CD4-positive, alpha-beta T cell (primary cell): ENCODE measurements at regions of chr6 and their contacts with region 1.

Region 1: DNA sequence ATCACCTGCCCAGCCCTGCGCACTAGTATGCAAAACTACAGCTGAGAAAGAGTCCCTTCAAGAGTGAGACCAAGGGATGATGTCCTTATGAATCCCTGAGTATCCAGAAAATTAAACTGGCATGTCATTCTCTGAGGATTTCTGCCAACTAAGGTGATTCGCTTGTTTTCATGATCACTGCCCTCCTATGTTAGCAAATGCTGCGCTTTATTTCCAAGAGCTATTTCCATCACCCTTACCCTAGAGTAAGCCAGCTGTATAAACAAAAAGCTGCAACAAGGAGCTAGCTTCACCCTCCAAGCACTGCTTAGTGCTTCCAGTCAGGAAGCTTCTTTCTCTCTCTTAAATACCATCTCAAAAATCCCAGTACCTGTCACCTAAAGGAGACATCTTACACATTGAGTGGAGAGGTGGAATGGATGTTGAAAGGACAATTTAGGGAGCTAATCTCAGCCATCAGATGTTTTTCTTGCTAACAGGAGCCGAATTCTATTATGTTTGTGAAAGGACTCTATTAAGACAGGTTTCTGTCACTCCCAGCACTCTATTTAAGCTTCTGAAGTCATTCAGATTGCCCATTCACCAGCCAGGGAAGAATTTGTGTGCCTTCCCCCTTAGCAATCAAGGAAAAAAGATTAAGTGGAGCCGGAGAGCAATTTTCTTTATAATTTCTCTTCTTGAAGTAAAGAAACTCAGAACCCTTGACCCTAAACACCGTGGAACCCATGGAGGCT is 322.2 kb downstream of the NRN1 start:
- DNase-seq: no peak
- ATAC-seq: no peak
- H3K4me3 ChIP-seq: no peak overlapping the region
- H3K4me3 Mint-ChIP-seq: no peak overlapping the region
- H3K27ac ChIP-seq: no peak overlapping the region
- H3K27ac Mint-ChIP-seq: no peak overlapping the region
- H3K4me1 ChIP-seq: no peaks in the 10 kb centered on the region
- H3K4me1 Mint-ChIP-seq: peaks cover 22% of the 10 kb centered on the region
- H3K27me3 ChIP-seq: no peaks in the 10 kb centered on the region
- H3K27me3 Mint-ChIP-seq: no peaks in the 10 kb centered on the region
- CTCF ChIP-seq: no peak

Region 2: DNA sequence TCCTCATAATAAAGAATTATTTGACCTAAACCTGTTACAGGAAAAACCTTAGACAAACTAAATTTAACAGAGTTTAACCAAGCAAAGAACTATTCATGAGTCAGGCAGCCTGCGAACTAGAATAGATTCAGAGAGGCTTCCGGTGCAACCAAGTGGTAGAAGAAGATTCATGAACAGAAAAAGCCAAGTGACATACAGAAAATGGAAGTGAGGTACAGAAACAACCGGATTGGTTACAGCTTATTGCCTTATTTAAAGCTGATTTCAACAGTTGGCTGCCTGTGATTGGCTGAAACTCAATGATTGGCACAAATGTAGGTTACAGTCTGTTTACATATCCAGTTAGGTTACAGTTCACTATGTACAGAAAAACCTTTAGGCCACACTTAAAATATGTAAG is 589.3 kb before region 1 on chr6:
- CTCF ChIA-PET with region 1: no interaction called
- POLR2A ChIA-PET with region 1: no interaction called
- intact Hi-C with region 1: no loop called
- DNase-seq: no peak
- ATAC-seq: no peak
- H3K4me3 ChIP-seq: no peak overlapping the region
- H3K4me3 Mint-ChIP-seq: no peak overlapping the region
- H3K27ac ChIP-seq: no peak overlapping the region
- H3K27ac Mint-ChIP-seq: no peak overlapping the region
- H3K4me1 ChIP-seq: no peaks in the 10 kb centered on the region
- H3K4me1 Mint-ChIP-seq: peaks cover 19% of the 10 kb centered on the region
- H3K27me3 ChIP-seq: peaks cover 3 to 9% of the 10 kb centered on the region in 2 experiments
- H3K27me3 Mint-ChIP-seq: peaks cover 22% of the 10 kb centered on the region
- CTCF ChIP-seq: no peak

Region 3: DNA sequence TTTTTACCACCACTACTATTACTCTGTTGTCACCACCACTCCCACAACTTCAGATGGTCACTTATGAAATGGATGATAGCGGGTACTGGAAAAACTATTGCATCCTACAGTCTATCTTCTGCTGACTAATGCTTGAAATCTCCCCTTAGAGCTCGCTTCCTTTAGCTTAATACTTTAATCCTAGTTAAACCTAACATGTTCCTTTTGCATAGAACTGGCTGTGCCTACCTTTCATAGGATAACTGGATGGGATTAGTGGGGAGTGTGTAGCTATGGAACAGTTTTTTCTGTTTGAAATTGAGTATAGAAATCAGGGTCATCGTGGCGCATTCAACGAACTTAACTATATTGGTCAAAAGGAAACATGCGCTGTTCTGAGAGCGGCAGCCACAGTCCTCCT is 128.5 kb before region 1 on chr6:
- CTCF ChIA-PET with region 1: no interaction called
- POLR2A ChIA-PET with region 1: no interaction called
- intact Hi-C with region 1: no loop called
- DNase-seq: no peak
- ATAC-seq: no peak
- H3K4me3 ChIP-seq: no peak overlapping the region
- H3K4me3 Mint-ChIP-seq: no peak overlapping the region
- H3K27ac ChIP-seq: no peak overlapping the region
- H3K27ac Mint-ChIP-seq: no peak overlapping the region
- H3K4me1 ChIP-seq: no peaks in the 10 kb centered on the region
- H3K4me1 Mint-ChIP-seq: peaks cover 5% of the 10 kb centered on the region
- H3K27me3 ChIP-seq: no peaks in the 10 kb centered on the region
- H3K27me3 Mint-ChIP-seq: no peaks in the 10 kb centered on the region
- CTCF ChIP-seq: no peak

Region 4: GRCh38 chr6:5706124-5707033 is 21.9 kb after region 1 on chr6:
- CTCF ChIA-PET with region 1: no interaction called
- POLR2A ChIA-PET with region 1: no interaction called
- intact Hi-C with region 1: loop called in 1 of 2 experiments (anchors 2 kb)
- DNase-seq: peak in 5 of 14 experiments; percentile 6 to 37 (median 33)
- ATAC-seq: peak; percentile 78
- H3K4me3 ChIP-seq: no peak overlapping the region
- H3K4me3 Mint-ChIP-seq: peak overlapping the region; percentile 69
- H3K27ac ChIP-seq: no peak overlapping the region
- H3K27ac Mint-ChIP-seq: peak overlapping the region; percentile 78
- H3K4me1 ChIP-seq: peaks cover 18% of the 10 kb centered on the region
- H3K4me1 Mint-ChIP-seq: peaks cover 43% of the 10 kb centered on the region
- H3K27me3 ChIP-seq: no peaks in the 10 kb centered on the region
- H3K27me3 Mint-ChIP-seq: no peaks in the 10 kb centered on the region
- CTCF ChIP-seq: no peak

Region 5: GRCh38 chr6:6736791-6737654 is 1052.5 kb after region 1 on chr6:
- CTCF ChIA-PET with region 1: no interaction called
- POLR2A ChIA-PET with region 1: no interaction called
- intact Hi-C with region 1: no loop called
- DNase-seq: no peak
- ATAC-seq: no peak
- H3K4me3 ChIP-seq: no peak overlapping the region
- H3K4me3 Mint-ChIP-seq: no peak overlapping the region
- H3K27ac ChIP-seq: no peak overlapping the region
- H3K27ac Mint-ChIP-seq: no peak overlapping the region
- H3K4me1 ChIP-seq: no peaks in the 10 kb centered on the region
- H3K4me1 Mint-ChIP-seq: no peaks in the 10 kb centered on the region
- H3K27me3 ChIP-seq: peaks cover 10 to 11% of the 10 kb centered on the region in 2 experiments
- H3K27me3 Mint-ChIP-seq: peaks cover 34% of the 10 kb centered on the region
- CTCF ChIP-seq: no peak